Vagina (tissue), 2 donors: ENCODE measurements at regions of chr18 and their contacts with region 1.

Region 1: GRCh38 chr18:54780285-54780861 is 47.9 kb upstream of the RAB27B start:
- DNase-seq: no peak
- H3K4me3 ChIP-seq: no peak overlapping the region
- H3K27ac ChIP-seq: no peak overlapping the region
- H3K4me1 ChIP-seq: peaks cover 21% of the 10 kb centered on the region
- H3K27me3 ChIP-seq: no peaks in the 10 kb centered on the region
- CTCF ChIP-seq: no peak
- POLR2A ChIP-seq: no peak

Region 2: DNA sequence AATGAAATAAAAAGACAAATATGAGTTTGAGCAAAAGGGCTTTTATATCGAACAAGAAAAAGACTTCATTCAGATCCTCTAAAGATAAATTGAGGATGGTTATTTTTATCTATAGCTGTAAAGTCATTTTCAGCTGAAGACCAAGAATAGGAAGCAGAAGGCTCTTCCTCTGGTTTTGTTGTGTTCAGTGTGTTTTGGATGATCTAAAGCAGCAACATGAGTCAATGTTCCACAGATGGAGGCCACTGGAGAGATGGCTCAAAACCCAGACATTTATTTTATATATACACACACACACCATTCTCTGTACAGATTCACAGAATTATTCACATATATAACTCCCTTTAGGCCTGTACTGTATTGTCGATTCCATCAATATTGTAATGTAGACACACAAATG is 980.2 kb before region 1 on chr18:
- intact Hi-C with region 1: loop called (anchors 5 kb)
- DNase-seq: no peak
- H3K4me3 ChIP-seq: no peak overlapping the region
- H3K27ac ChIP-seq: no peak overlapping the region
- H3K4me1 ChIP-seq: no peaks in the 10 kb centered on the region
- H3K27me3 ChIP-seq: no peaks in the 10 kb centered on the region
- CTCF ChIP-seq: no peak
- POLR2A ChIP-seq: no peak

Region 3: DNA sequence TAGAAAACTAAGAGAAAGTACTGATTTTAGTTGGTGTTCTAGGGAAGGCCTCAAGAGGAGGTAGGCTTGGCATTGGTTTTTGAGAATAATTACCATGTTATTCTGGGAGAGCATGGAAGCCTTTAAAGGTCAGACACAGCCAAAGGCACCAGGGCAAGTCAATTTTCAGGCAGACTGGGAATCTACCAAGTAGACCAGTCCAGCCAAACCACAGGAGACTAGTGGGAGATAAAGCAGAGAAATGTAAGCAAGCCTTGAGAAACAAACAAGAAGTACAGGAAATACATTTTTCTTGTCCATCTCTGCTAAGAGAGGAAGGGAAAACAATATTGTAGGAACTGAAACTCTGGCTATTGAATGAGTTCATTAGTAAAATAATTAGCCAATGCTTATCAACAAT is 184.4 kb after region 1 on chr18:
- intact Hi-C with region 1: no loop called
- DNase-seq: no peak
- H3K4me3 ChIP-seq: no peak overlapping the region
- H3K27ac ChIP-seq: no peak overlapping the region
- H3K4me1 ChIP-seq: peaks cover 15% of the 10 kb centered on the region
- H3K27me3 ChIP-seq: no peaks in the 10 kb centered on the region
- CTCF ChIP-seq: no peak
- POLR2A ChIP-seq: no peak